ENCODE measurements at regions of chr3 and their contacts with region 1.

Region 1: GRCh38 chr3:143119009-143119914 is at the start of gene CHST2:
- DNase-seq: peak; percentile 71
- ATAC-seq: peak; percentile 96
- H3K4me3 ChIP-seq: peak within 1 kb of the TSS; percentile 94
- H3K27ac ChIP-seq: peak within 1 kb of the TSS; percentile 33; the same call in 1 of the 2 replicates
- H3K4me1 ChIP-seq: no peaks in the 10 kb centered on the region
- H3K27me3 ChIP-seq: peaks cover 12% of the 10 kb centered on the region
- CTCF ChIP-seq: no peak
- POLR2A ChIP-seq: no peak
- RAD21 ChIP-seq: no peak
- total RNA-seq, gene CHST2: 0.90 and 1.1 TPM in 2 replicates

Region 2: DNA sequence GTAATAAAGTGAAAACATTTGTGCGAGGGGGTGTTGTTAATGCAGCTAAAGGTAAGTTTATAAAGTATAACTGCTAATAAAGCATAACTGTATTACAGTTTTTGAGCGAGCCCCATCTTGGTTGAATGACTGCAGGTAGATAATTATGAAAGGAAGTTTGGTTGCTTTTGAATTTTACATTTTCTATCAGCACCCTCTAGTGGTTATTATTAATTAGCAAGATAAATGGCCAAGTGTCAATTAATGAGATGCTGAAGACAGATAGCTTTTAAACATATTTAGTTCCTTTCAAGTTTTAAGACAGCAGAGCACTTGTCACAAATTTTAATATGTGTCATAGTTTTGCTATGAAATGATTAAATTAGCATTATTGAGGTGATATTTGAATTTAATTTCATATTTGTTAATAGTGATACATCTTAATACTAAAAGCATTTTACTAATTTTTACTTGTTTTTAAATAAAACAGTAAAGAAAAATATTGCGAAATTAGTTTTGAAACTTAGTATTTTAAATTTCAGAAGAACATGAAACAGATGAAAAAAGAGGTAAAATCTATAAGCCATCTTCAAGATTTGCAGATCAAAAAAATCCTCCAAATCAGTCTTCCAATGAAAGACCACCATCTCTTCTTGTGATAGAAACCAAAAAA is 102.8 kb before region 1 on chr3:
- CTCF ChIA-PET with region 1: no interaction called
- POLR2A ChIA-PET with region 1: no interaction called
- dilution Hi-C with region 1: no loop called
- in situ Hi-C with region 1: no loop called
- intact Hi-C with region 1: no loop called
- DNase-seq: no peak
- ATAC-seq: no peak
- H3K4me3 ChIP-seq: no peak overlapping the region
- H3K27ac ChIP-seq: no peak overlapping the region
- H3K4me1 ChIP-seq: no peaks in the 10 kb centered on the region
- H3K27me3 ChIP-seq: no peaks in the 10 kb centered on the region
- CTCF ChIP-seq: peak; percentile 40
- POLR2A ChIP-seq: no peak
- RAD21 ChIP-seq: 0 out of 2 replicates have a peak, but pooled peaks have one; percentile 9

Region 3: DNA sequence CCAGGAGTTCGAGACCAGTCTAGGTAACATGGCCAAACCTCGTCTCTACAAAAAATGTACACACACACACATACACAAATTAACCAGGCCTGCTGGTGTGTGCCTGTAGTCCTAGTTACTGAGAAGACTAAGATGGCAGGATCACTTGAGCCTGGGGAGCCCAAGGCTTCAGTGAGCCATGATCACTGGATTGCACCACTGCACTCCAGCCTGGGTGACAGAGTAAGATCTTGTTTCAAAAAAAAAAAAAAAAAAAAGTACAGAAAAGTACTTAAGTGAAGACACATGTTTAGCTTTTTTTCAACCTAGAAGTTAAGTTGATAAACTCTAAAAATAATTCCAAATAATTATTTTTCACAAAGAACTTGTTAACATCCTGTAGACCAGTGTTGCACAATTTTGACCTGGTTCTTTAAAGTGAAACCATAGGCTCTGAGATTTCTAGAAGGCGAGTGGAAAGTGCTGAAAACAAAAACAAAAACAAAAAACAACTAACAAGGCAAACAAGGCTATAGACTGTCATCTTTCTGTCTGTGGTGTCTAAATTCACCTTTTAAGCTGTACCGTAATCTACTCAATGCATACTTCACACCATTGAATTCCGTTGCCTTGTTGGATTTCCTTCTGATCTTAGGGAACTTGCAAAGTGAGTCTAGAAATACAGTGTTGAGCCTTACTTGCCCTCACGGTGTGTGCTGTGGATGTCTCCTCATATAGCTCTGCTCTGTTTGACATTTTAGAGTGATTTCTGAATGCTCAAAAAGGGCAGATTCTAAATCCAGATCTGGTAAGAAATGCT is 63.8 kb after region 1 on chr3:
- CTCF ChIA-PET with region 1: no interaction called
- POLR2A ChIA-PET with region 1: no interaction called
- dilution Hi-C with region 1: no loop called
- in situ Hi-C with region 1: no loop called
- intact Hi-C with region 1: no loop called
- DNase-seq: no peak
- ATAC-seq: no peak
- H3K4me3 ChIP-seq: no peak overlapping the region
- H3K27ac ChIP-seq: no peak overlapping the region
- H3K4me1 ChIP-seq: no peaks in the 10 kb centered on the region
- H3K27me3 ChIP-seq: no peaks in the 10 kb centered on the region; the same call in 1 of the 2 replicates
- CTCF ChIP-seq: no peak
- POLR2A ChIP-seq: no peak
- RAD21 ChIP-seq: no peak

Region 4: GRCh38 chr3:143302638-143303171 is 183.4 kb after region 1 on chr3:
- CTCF ChIA-PET with region 1: no interaction called
- POLR2A ChIA-PET with region 1: no interaction called
- dilution Hi-C with region 1: no loop called
- in situ Hi-C with region 1: loop called (anchors 10 kb)
- intact Hi-C with region 1: no loop called
- DNase-seq: peak; percentile 74
- ATAC-seq: peak; percentile 83
- H3K4me3 ChIP-seq: no peak overlapping the region
- H3K27ac ChIP-seq: no peak overlapping the region
- H3K4me1 ChIP-seq: peaks cover 3% of the 10 kb centered on the region
- H3K27me3 ChIP-seq: no peaks in the 10 kb centered on the region
- CTCF ChIP-seq: no peak
- POLR2A ChIP-seq: no peak
- RAD21 ChIP-seq: no peak

Region 5: DNA sequence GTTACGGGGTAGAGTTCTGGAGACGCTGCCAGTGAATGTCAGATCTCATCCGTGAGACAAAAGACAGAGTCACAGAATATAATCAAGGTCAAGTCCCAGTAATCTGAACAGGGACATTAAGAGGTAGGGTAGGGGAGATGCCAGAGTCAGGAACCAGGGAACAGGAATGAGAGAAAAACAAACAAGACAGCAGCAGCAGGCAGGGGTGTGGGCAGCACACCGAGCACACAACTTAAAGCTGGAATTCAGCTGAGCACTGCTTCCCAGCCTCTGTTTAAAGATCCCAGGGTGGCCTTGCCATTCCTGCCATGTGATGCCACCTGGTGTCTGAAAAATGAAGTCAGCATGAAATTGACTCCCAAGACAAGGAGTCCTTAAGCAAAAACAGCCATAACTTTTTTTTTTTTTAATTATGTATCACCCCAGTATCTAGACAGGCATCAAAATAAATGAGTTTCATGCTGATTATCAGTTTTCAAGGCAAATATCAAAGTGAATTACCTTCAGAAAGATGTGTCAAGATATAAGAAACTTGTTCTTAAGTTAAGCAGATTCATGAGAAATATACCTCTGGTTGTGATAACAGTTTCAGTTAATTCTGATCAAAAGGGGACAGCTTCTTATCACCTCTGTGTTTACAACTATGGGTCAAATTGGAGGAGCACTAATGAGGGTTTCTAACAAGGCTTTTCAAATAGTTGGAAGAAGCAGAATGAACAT is 525.3 kb after region 1 on chr3:
- CTCF ChIA-PET with region 1: interaction called, 9 read pairs
- POLR2A ChIA-PET with region 1: no interaction called
- dilution Hi-C with region 1: no loop called
- in situ Hi-C with region 1: no loop called
- intact Hi-C with region 1: loop called (anchors 1 kb)
- DNase-seq: peak; percentile 59
- ATAC-seq: peak; percentile 91
- H3K4me3 ChIP-seq: no peak overlapping the region
- H3K27ac ChIP-seq: no peak overlapping the region
- H3K4me1 ChIP-seq: no peaks in the 10 kb centered on the region
- H3K27me3 ChIP-seq: no peaks in the 10 kb centered on the region
- CTCF ChIP-seq: peak; percentile 51
- POLR2A ChIP-seq: no peak
- RAD21 ChIP-seq: peak; percentile 73

Region 6: DNA sequence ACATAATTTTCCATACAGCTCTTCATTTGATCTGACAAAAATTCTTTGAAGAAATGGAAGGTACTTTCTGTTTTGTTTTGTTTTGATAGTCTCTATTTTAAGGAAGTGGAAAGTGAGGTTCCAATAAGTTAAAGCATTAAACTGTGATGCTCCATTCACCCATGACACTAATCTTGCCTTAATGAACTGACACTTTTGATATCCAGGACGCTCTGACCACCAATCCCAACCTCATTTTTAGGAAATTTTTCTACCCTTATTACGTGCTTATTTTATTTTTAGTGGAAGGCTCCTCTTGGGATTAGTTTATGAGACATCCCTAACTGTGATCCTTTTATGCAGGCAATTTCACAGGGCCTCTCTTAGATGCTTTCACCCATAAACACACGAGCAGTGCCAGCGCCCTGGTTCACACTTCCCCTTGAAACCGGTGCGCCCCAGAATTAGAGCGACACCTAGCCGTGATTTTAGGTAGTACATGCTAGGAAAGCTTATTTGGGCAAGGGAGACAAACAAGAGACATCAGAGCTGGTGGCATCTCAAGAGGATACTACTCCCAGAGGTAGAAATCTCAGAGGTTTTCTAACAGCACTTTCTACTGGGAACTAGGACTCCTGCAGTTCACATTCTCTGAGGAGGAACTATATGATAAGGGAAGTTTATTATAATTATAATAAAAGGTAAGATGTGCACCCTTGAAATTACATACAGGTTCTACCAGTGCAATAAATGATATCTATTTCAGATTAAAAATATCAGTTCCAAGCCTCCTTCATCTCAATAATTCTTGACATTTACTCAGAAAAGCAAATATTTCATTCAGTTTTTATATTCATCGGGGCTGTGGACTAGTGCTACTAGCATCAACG is 555.1 kb after region 1 on chr3:
- CTCF ChIA-PET with region 1: interaction called, 4 read pairs
- POLR2A ChIA-PET with region 1: no interaction called
- dilution Hi-C with region 1: no loop called
- in situ Hi-C with region 1: no loop called
- intact Hi-C with region 1: loop called (anchors 1 kb)
- DNase-seq: peak; percentile 57
- ATAC-seq: peak; percentile 96
- H3K4me3 ChIP-seq: no peak overlapping the region
- H3K27ac ChIP-seq: no peak overlapping the region
- H3K4me1 ChIP-seq: no peaks in the 10 kb centered on the region
- H3K27me3 ChIP-seq: no peaks in the 10 kb centered on the region
- CTCF ChIP-seq: peak; percentile 79
- POLR2A ChIP-seq: no peak
- RAD21 ChIP-seq: peak; percentile 80

Region 7: DNA sequence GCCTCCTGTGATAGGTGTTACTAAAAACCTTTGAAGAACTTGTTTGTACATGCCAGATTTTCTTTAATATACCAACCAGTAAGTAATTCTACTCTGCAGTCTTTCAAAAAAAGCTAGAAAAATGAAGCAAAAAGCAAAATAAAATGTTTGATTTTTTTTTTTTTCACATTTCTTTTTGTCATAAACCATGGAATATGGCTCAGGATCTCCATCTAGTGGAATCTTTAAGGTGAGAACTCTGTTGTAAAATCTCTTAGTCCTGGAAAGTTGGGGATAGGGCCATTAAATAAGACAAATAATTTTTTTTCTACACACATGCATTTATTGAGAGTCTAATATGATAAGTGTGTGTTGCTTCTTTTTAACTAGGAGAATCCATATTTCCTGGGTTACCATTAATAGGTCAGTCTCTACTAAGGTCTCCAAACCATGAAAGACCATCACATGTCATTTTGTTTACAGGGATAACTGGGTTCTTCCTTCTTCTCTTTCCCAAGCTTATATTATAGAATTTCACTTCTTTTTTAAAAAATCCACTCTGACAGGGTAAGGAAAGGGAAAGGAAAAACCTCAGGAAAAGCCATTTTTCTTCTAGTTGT is 644.4 kb after region 1 on chr3:
- CTCF ChIA-PET with region 1: no interaction called
- POLR2A ChIA-PET with region 1: no interaction called
- dilution Hi-C with region 1: no loop called
- in situ Hi-C with region 1: no loop called
- intact Hi-C with region 1: loop called (anchors 2 kb)
- DNase-seq: peak; percentile 13
- ATAC-seq: peak; percentile 70
- H3K4me3 ChIP-seq: no peak overlapping the region
- H3K27ac ChIP-seq: no peak overlapping the region
- H3K4me1 ChIP-seq: no peaks in the 10 kb centered on the region
- H3K27me3 ChIP-seq: no peaks in the 10 kb centered on the region
- CTCF ChIP-seq: peak; percentile 36
- POLR2A ChIP-seq: no peak
- RAD21 ChIP-seq: peak; percentile 37

Measured in IMR-90 (cell line).